AG04449 (cell line): ENCODE measurements at regions of chr2 and their contacts with region 1.

Region 1: GRCh38 chr2:54680397-54681041 is 42.9 kb upstream of the EML6 start:
- DNase-seq: no peak
- H3K4me3 ChIP-seq: no peak overlapping the region
- CTCF ChIP-seq: no peak

Region 2: GRCh38 chr2:54657664-54658083 is 22.8 kb before region 1 on chr2:
- CTCF ChIA-PET with region 1: interaction called, 13 read pairs
- POLR2A ChIA-PET with region 1: no interaction called
- DNase-seq: no peak
- H3K4me3 ChIP-seq: no peak overlapping the region
- CTCF ChIP-seq: peak; percentile 55

Region 3: GRCh38 chr2:54665436-54665856 is 15.1 kb before region 1 on chr2:
- CTCF ChIA-PET with region 1: interaction called, 24 read pairs
- POLR2A ChIA-PET with region 1: interaction called, 4 read pairs
- DNase-seq: no peak
- H3K4me3 ChIP-seq: no peak overlapping the region
- CTCF ChIP-seq: peak; percentile 45